Sigmoid colon (tissue), 7 donors: ENCODE measurements at regions of chr21 and their contacts with region 1.

Region 1: DNA sequence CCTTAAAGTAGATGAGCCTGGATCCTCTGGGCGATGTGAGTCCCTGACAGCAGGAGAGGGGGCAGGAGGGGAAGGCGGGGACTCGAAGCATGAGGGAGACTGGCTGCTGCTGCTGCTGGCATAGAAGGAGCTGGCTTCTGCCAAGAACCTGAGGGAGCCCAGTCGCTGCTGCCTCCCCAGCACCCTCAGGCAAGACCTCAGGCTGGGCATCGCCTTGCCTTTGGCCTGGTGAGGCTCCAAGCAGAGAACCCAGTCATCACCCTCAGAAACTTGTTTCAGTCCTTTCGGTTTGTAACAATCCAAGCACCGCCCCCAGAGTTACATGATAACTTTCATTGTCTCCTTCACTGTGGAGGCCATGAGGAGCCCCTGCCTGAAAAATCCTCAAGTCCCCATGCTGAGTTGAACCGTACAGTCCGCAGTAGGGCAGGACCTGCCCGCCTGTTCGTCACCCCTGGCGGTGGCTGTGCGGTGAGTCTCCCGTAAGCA is 38.8 kb downstream of the POFUT2 start:
- DNase-seq: peak; percentile 91
- H3K4me3 ChIP-seq: peak overlapping the region in 2 of 4 donors; percentile 29 to 37
- H3K27ac ChIP-seq: peak overlapping the region in 3 of 4 donors; percentile 70 to 78 (median 72)
- H3K4me1 ChIP-seq: peaks cover 0 to 31% (median 21%) of the 10 kb centered on the region in 4 donors
- H3K27me3 ChIP-seq: no peaks in the 10 kb centered on the region
- CTCF ChIP-seq: no peak
- EP300 ChIP-seq: no peak
- POLR2A ChIP-seq: no peak

Region 2: GRCh38 chr21:45167796-45168222 is 81.1 kb before region 1 on chr21:
- intact Hi-C with region 1: loop called (anchors 10 kb)
- DNase-seq: no peak
- H3K4me3 ChIP-seq: no peak overlapping the region
- H3K27ac ChIP-seq: peak overlapping the region in 3 of 4 donors; percentile 41 to 74 (median 65)
- H3K4me1 ChIP-seq: peaks cover 0 to 52% (median 50%) of the 10 kb centered on the region in 4 donors
- H3K27me3 ChIP-seq: no peaks in the 10 kb centered on the region
- CTCF ChIP-seq: no peak
- EP300 ChIP-seq: no peak
- POLR2A ChIP-seq: no peak